Activated T-helper 1 cell treated with anti-CD3 and anti-CD28 coated beads, Interleukin-12 subunit alpha, Interleukin-12 subunit beta, Interleukin-2, Interleukin-4 antibody, amounts not matched to agents 30 ng/mL and 10 ng/mL and 1 ng/mL, durations not matched to agents 14 hours and 24 hours and 36 hours (primary cell): ENCODE measurements at regions of chr17 and their contacts with region 1.

Region 1: GRCh38 chr17:3636154-3636907 is at the starts of genes CTNS and SHPK:
- DNase-seq: peak; percentile 95
- H3K4me3 Mint-ChIP-seq: peak within 1 kb of the TSS; percentile 95
- H3K27ac Mint-ChIP-seq: peak within 1 kb of the TSS; percentile 98
- H3K4me1 Mint-ChIP-seq: peaks cover 48% of the 10 kb centered on the region
- H3K27me3 Mint-ChIP-seq: no peaks in the 10 kb centered on the region
- total RNA-seq, gene CTNS: 47.5 and 55.3 TPM in 2 replicates
- total RNA-seq, gene SHPK: 20.0 and 21.5 TPM in 2 replicates

Region 2: GRCh38 chr17:3048767-3049471 is 587.4 kb before region 1 on chr17:
- intact Hi-C with region 1: loop called (anchors 5 kb)
- DNase-seq: peak; percentile 86
- H3K4me3 Mint-ChIP-seq: peak overlapping the region; percentile 90
- H3K27ac Mint-ChIP-seq: peak overlapping the region; percentile 84
- H3K4me1 Mint-ChIP-seq: peaks cover 5% of the 10 kb centered on the region
- H3K27me3 Mint-ChIP-seq: peaks cover 5% of the 10 kb centered on the region

Region 3: DNA sequence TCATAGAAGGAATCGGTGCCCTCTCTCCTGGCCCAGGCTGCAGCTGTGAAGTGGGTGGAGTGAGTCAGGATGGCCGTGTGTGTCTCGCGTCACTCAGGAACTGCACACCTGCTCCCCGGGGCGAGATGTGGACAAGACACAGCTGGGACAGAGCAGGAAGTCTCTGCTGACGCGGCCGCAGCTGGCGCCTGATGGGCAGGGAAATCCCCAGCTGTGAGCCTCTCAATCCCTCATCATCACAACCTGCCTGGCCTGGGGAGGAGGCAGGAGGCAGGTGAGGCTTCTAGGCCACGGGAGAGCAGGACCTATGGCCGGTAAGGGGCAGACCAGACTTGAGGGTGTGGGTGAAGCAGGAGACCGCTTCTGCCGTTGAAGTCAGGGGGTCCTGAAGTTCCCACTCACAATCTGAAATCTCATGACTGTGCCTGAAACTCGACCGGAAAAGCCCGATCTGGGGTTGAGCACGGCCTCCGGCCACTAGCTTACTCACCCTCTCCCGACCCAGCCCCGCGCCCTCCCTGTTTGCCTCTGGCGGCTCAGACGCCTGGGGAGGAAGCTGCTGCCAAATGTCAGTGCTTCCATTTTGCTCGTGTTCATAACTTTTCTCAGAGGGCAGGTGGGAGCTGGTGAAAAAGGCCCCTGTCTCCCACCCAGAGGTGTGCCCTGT is 77.6 kb before region 1 on chr17:
- intact Hi-C with region 1: loop called (anchors 2 kb)
- DNase-seq: peak; percentile 42
- H3K4me3 Mint-ChIP-seq: peak overlapping the region; percentile 61
- H3K27ac Mint-ChIP-seq: peak overlapping the region; percentile 76
- H3K4me1 Mint-ChIP-seq: peaks cover 34% of the 10 kb centered on the region
- H3K27me3 Mint-ChIP-seq: peaks cover 2% of the 10 kb centered on the region

Region 4: GRCh38 chr17:3602499-3602898 is 33.8 kb before region 1 on chr17:
- intact Hi-C with region 1: loop called (anchors 5 kb)
- DNase-seq: no peak
- H3K4me3 Mint-ChIP-seq: no peak overlapping the region
- H3K27ac Mint-ChIP-seq: no peak overlapping the region
- H3K4me1 Mint-ChIP-seq: no peaks in the 10 kb centered on the region
- H3K27me3 Mint-ChIP-seq: no peaks in the 10 kb centered on the region

Region 5: GRCh38 chr17:3893003-3893719 is 256.8 kb after region 1 on chr17 and contains the start of gene CAMKK1:
- intact Hi-C with region 1: loop called (anchors 1 kb)
- DNase-seq: peak; percentile 90
- H3K4me3 Mint-ChIP-seq: peak within 1 kb of the TSS; percentile 82
- H3K27ac Mint-ChIP-seq: peak within 1 kb of the TSS; percentile 86
- H3K4me1 Mint-ChIP-seq: peaks cover 30% of the 10 kb centered on the region
- H3K27me3 Mint-ChIP-seq: no peaks in the 10 kb centered on the region
- total RNA-seq, gene CAMKK1: 6.1 and 7.8 TPM in 2 replicates